ENCODE measurements at regions of chr1 and their contacts with region 1.

Region 1: DNA sequence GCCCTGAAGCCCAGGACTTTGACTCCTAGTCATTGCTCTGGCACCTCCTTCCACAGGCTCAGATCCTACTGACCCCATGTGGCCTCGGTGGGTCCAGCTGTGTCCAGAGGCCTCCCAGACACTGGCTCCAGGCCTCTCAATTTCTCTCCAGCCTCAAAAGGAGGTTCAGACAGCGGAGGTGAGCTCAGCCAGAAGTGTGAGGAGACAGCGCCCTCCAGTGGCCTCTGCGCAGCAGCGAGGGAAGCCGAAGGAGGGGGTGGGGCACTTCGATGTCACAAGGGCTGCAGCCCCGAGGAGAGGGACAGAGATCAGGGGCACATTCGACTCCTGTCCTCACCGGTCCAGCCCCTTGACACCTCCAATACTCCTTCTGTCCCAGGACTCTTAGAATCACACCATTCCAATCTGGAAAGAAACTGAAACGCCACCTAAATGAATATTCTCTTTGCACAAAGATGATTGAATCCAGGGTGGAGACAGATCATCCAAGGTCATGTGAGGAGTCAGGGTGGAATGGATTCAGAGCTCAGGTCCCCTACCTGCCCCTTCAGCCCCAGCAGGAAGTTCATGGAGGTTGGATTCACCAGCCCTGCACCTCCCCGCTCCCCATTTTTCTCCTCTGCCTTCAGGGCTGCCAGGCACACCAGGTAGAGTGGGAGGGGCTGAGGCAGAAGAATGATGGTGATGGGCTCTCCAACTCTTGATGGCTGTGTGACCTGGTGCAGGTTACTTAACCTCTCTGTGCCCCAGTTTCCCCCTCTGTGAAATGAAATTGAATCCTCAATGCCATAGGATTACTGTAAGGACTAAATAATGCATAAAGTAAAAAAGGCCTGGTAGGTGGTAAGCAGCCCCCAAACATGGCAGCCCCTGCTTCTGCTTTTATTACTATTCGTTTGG is 34.8 kb upstream of the ZBTB40 start:
- DNase-seq: peak; percentile 82 to 94
- H3K4me3 ChIP-seq: no peak overlapping the region
- H3K27ac ChIP-seq: no peak overlapping the region
- H3K4me1 ChIP-seq: peaks cover 14 to 35% (median 30%) of the 10 kb centered on the region in 4 donors
- H3K27me3 ChIP-seq: peaks cover 0 to 43% (median 0%) of the 10 kb centered on the region in 3 donors
- CTCF ChIP-seq: peak in 5 of 7 experiments; percentile 71 to 93 (median 85)
- EP300 ChIP-seq: no peak
- POLR2A ChIP-seq: no peak

Region 2: GRCh38 chr1:22131875-22132486 is 284.8 kb before region 1 on chr1:
- intact Hi-C with region 1: loop called (anchors 5 kb)
- DNase-seq: peak; percentile 68 to 83
- H3K4me3 ChIP-seq: no peak overlapping the region
- H3K27ac ChIP-seq: no peak overlapping the region
- H3K4me1 ChIP-seq: peaks cover 5 to 15% (median 13%) of the 10 kb centered on the region in 4 donors
- H3K27me3 ChIP-seq: peaks cover 0 to 4% (median 0%) of the 10 kb centered on the region in 3 donors
- CTCF ChIP-seq: peak in 5 of 7 experiments; percentile 43 to 84 (median 73)
- EP300 ChIP-seq: no peak
- POLR2A ChIP-seq: no peak

Region 3: GRCh38 chr1:22641906-22642636 is 225.3 kb after region 1 on chr1:
- intact Hi-C with region 1: loop called (anchors 2 kb)
- DNase-seq: peak; percentile 88 to 90
- H3K4me3 ChIP-seq: no peak overlapping the region
- H3K27ac ChIP-seq: peak overlapping the region in 1 of 5 donors; percentile 8
- H3K4me1 ChIP-seq: peaks cover 0 to 10% (median 7%) of the 10 kb centered on the region in 4 donors
- H3K27me3 ChIP-seq: peaks cover 0 to 59% (median 0%) of the 10 kb centered on the region in 3 donors
- CTCF ChIP-seq: peak in 6 of 7 experiments; percentile 12 to 89 (median 82)
- EP300 ChIP-seq: no peak
- POLR2A ChIP-seq: no peak